ENCODE measurements at regions of chr18 and their contacts with region 1.

Region 1: DNA sequence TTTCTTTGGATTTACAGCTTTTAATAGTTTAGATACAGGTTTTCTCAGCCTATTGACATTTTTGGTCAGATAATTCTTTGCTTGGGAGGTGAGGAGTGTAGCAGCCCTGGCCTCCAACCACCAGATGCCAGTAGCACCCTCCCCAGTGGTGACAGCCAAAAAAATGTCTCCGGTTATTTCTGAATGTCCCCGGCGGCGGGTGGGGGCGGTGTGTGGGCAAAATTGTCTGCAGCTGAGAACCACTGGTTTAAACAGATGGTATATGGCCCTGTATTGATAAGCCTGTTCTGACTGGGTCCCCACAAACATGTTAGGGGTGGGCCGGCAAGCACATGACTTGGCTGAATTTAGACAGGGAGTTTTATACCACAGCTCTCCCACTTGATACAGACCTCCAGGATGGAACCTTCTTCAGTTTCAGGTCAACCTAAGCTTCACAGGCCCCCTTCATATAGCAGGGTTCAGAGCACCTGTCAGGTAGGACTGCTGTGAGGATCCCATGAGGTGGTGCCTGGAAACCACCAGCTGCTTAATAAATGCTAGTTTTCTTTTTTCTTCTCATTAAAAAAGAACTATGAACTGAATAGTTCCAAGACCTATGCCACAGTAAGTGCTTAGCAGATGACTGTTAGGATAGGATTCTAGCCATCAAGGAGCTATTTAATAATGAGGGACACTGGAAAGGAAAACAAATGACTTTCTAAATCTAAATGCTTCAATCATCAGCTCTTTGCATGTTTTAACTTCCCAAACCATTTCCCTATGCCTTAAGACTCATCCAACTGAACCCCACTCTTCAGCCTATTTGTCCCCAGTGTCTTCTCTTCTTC is 18.1 kb downstream of the LPIN2 start:
- DNase-seq: peak; percentile 50 to 87 (median 76)
- ATAC-seq: peak; percentile 92
- H3K4me3 ChIP-seq: peak overlapping the region in 1 of 2 experiments; percentile 22
- H3K4me3 Mint-ChIP-seq: peak overlapping the region; percentile 56
- H3K27ac ChIP-seq: no peak overlapping the region
- H3K27ac Mint-ChIP-seq: peak overlapping the region; percentile 78
- H3K4me1 ChIP-seq: peaks cover 46% of the 10 kb centered on the region
- H3K4me1 Mint-ChIP-seq: peaks cover 69% of the 10 kb centered on the region
- H3K27me3 ChIP-seq: no peaks in the 10 kb centered on the region
- H3K27me3 Mint-ChIP-seq: no peaks in the 10 kb centered on the region
- CTCF ChIP-seq: peak; percentile 72

Region 2: GRCh38 chr18:2687390-2688001 is 307.3 kb before region 1 on chr18:
- CTCF ChIA-PET with region 1: no interaction called
- POLR2A ChIA-PET with region 1: no interaction called
- intact Hi-C with region 1: no loop called
- DNase-seq: no peak
- ATAC-seq: no peak
- H3K4me3 ChIP-seq: no peak overlapping the region
- H3K4me3 Mint-ChIP-seq: peak overlapping the region; percentile 38
- H3K27ac ChIP-seq: peak overlapping the region in 1 of 2 experiments; percentile 26
- H3K27ac Mint-ChIP-seq: peak overlapping the region; percentile 23
- H3K4me1 ChIP-seq: peaks cover 27% of the 10 kb centered on the region
- H3K4me1 Mint-ChIP-seq: peaks cover 64% of the 10 kb centered on the region
- H3K27me3 ChIP-seq: no peaks in the 10 kb centered on the region
- H3K27me3 Mint-ChIP-seq: no peaks in the 10 kb centered on the region
- CTCF ChIP-seq: no peak

Region 3: DNA sequence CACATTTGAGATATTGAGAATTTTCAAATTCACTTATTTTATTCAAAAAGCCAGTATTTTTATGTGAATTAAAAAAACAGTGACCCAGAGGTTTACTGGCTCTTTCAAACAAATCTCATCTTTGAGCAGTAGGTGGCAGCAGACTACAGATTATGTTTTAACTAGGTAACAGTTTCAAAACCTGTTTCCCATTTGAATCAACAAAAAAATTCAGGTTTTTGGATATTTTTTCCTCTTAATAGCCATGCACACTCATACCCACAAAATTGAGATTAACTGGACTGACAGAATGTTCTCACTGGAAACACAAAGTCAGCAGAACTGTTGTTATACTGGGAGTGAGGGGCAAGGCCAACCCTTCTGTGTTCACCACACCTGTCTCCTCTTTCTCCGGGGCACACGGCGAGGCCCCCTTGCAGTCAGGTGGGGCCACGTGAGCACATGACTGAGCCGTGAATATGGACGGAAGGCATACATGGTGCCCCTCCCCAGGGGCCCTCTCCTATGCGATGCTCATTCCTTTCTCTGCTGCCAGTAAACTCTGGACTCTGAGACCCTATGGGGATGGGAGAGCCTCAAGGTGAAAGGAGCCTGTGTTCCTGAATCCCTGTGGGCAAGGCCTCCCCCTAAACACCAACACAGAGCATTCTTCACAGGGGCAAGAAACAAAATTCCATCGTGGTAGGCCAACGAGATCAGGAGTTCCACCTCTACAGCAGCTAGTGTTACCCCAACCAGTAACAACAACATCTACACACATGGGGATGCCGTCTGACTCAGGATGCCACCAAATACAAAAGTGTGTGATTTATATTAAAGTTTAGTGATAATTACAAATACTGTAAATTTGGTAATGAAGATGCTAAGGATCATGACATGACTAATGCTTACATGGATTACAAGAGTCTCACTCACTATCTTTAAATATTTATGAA is 62.3 kb before region 1 on chr18:
- CTCF ChIA-PET with region 1: interaction called, 205 read pairs
- POLR2A ChIA-PET with region 1: no interaction called
- intact Hi-C with region 1: no loop called
- DNase-seq: peak in 6 of 9 experiments; percentile 37 to 82 (median 52)
- ATAC-seq: peak; percentile 79
- H3K4me3 ChIP-seq: no peak overlapping the region
- H3K4me3 Mint-ChIP-seq: no peak overlapping the region
- H3K27ac ChIP-seq: peak overlapping the region in 1 of 2 experiments; percentile 51
- H3K27ac Mint-ChIP-seq: peak overlapping the region; percentile 89
- H3K4me1 ChIP-seq: peaks cover 6% of the 10 kb centered on the region
- H3K4me1 Mint-ChIP-seq: peaks cover 23% of the 10 kb centered on the region
- H3K27me3 ChIP-seq: no peaks in the 10 kb centered on the region
- H3K27me3 Mint-ChIP-seq: no peaks in the 10 kb centered on the region
- CTCF ChIP-seq: peak; percentile 96

Region 4: DNA sequence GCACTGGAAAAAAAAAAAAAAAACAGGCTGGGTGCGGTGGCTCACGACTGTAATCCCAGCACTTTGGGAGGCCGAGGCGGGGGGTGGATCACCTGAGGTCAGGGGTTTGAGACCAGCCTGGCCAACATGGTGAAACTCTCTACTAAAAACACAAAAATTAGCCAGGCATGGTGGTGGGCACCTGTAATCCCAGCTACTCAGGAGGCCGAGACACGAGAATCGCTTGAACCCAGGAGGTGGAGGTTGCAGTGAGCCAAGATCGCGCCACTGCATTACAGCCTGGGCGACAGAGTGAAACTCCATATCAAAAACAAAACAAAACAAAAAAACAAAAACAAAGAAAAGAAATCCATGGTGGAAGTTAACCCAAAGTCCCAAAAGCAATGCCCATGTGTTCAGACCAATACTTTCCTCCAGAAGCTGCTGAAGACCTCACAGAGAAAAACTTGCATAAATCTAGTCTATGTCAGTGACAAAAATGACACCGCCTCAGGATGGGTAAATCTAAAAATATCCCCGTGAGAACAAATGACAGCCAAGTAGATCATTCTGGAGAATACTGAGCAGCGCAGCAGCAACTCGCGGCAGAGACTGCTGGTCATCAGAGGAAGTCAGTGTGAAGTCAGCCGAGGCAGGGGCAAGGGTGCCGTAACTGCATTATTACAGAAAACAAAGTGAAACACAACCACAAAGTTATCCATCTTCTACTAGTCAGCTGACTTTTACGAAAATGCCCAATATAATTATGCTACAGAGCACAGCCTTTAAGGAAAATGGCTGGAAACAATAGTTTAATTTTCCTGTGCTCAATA is 22.9 kb before region 1 on chr18:
- CTCF ChIA-PET with region 1: interaction called, 10 read pairs
- POLR2A ChIA-PET with region 1: interaction called, 3 read pairs
- intact Hi-C with region 1: no loop called
- DNase-seq: peak; percentile 30 to 90 (median 72)
- ATAC-seq: peak; percentile 78
- H3K4me3 ChIP-seq: peak overlapping the region; percentile 41
- H3K4me3 Mint-ChIP-seq: peak overlapping the region; percentile 88
- H3K27ac ChIP-seq: peak overlapping the region; percentile 43 to 96
- H3K27ac Mint-ChIP-seq: peak overlapping the region; percentile 95
- H3K4me1 ChIP-seq: peaks cover 81% of the 10 kb centered on the region
- H3K4me1 Mint-ChIP-seq: peaks cover 91% of the 10 kb centered on the region
- H3K27me3 ChIP-seq: no peaks in the 10 kb centered on the region
- H3K27me3 Mint-ChIP-seq: no peaks in the 10 kb centered on the region
- CTCF ChIP-seq: no peak

Region 5: DNA sequence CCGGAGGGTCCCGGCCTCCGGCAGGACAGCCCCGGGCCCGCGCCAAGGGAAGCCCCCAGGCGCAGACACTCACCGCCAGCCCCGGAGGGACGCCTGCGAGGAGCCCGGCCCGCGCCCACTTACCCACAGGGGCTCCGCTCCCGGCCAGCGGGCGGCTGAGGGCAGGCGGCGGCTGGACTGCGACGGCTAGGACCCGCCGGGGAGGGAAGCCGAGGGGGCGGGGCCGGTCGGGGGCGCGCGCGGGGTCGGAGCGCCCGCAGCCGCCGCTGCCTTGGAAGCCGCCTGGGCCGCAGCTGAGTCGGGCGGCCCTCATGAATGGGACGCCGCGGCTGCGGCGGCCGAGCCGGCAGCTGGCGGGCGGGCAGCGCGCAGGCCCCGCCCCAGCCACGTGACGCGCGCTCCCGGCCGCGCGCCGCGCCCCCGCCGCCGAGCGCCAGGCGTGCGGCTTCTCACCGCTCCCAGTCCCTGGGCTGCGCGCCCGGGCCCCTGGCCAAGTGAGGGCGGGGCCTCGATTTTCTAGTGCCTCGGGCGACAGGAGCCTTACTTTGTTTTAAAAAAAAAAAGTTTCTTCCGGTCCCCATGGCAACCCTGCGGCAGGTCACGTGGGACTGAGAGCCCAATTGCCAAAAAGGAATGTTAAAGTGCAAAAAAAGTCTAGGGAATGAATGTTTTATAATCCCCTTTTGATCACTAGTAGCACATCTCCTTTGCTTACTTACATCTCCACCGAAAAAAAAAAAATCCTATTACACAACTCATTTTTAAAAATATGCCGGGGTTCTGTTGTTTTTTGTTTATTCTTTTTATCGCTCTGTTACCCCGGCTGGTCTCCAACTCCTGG is 18.4 kb after region 1 on chr18 and contains the start of gene LPIN2:
- CTCF ChIA-PET with region 1: interaction called, 30 read pairs
- POLR2A ChIA-PET with region 1: interaction called, 6 read pairs
- intact Hi-C with region 1: loop called in 1 of 2 experiments (anchors 1 kb)
- DNase-seq: peak; percentile 93 to 98 (median 95)
- ATAC-seq: peak; percentile 87
- H3K4me3 ChIP-seq: peak within 1 kb of the TSS; percentile 53
- H3K4me3 Mint-ChIP-seq: peak within 1 kb of the TSS; percentile 95
- H3K27ac ChIP-seq: peak within 1 kb of the TSS; percentile 73 to 79
- H3K27ac Mint-ChIP-seq: peak within 1 kb of the TSS; percentile 93
- H3K4me1 ChIP-seq: peaks cover 55% of the 10 kb centered on the region
- H3K4me1 Mint-ChIP-seq: peaks cover 64% of the 10 kb centered on the region
- H3K27me3 ChIP-seq: no peaks in the 10 kb centered on the region
- H3K27me3 Mint-ChIP-seq: no peaks in the 10 kb centered on the region
- CTCF ChIP-seq: no peak
- total RNA-seq, gene LPIN2: 50.3 to 50.9 TPM

Region 6: DNA sequence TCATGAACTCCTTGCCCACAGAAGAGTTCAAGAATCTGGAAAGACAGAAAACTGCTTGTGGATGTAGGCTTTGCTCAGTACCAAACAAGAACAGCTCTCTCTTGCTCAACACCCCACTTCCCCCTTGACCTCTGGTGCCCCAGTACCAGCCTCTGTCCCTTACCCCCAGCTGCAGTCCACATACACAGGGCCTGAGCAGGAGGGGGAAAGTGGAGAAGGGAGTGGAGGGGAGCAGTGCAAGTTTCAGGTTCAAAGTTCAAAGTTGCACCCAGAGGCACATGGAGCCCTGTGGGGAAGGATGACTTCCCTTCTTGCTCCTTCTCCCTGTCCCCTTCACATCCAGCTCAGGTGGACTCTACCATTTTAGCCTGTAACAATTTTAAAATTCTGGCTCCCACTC is 79.3 kb after region 1 on chr18:
- CTCF ChIA-PET with region 1: interaction called, 18 read pairs
- POLR2A ChIA-PET with region 1: no interaction called
- intact Hi-C with region 1: no loop called
- DNase-seq: peak in 1 of 9 experiments; percentile 43
- ATAC-seq: no peak
- H3K4me3 ChIP-seq: no peak overlapping the region
- H3K4me3 Mint-ChIP-seq: no peak overlapping the region
- H3K27ac ChIP-seq: no peak overlapping the region
- H3K27ac Mint-ChIP-seq: no peak overlapping the region
- H3K4me1 ChIP-seq: no peaks in the 10 kb centered on the region
- H3K4me1 Mint-ChIP-seq: peaks cover 22% of the 10 kb centered on the region
- H3K27me3 ChIP-seq: no peaks in the 10 kb centered on the region
- H3K27me3 Mint-ChIP-seq: no peaks in the 10 kb centered on the region
- CTCF ChIP-seq: no peak

Region 7: GRCh38 chr18:3129053-3129864 is 134.4 kb after region 1 on chr18:
- CTCF ChIA-PET with region 1: interaction called, 155 read pairs
- POLR2A ChIA-PET with region 1: interaction called, 3 read pairs
- intact Hi-C with region 1: loop called (anchors 1 kb)
- DNase-seq: peak; percentile 58 to 86 (median 77)
- ATAC-seq: peak; percentile 99
- H3K4me3 ChIP-seq: no peak overlapping the region
- H3K4me3 Mint-ChIP-seq: no peak overlapping the region
- H3K27ac ChIP-seq: no peak overlapping the region
- H3K27ac Mint-ChIP-seq: no peak overlapping the region
- H3K4me1 ChIP-seq: no peaks in the 10 kb centered on the region
- H3K4me1 Mint-ChIP-seq: peaks cover 9% of the 10 kb centered on the region
- H3K27me3 ChIP-seq: no peaks in the 10 kb centered on the region
- H3K27me3 Mint-ChIP-seq: no peaks in the 10 kb centered on the region
- CTCF ChIP-seq: peak; percentile 67

Region 8: GRCh38 chr18:3245853-3246634 is 251.2 kb after region 1 on chr18:
- CTCF ChIA-PET with region 1: interaction called, 39 read pairs
- POLR2A ChIA-PET with region 1: interaction called, 14 read pairs
- intact Hi-C with region 1: loop called (anchors 1 to 5 kb)
- DNase-seq: peak; percentile 44 to 89 (median 78)
- ATAC-seq: peak; percentile 60
- H3K4me3 ChIP-seq: peak overlapping the region; percentile 77 to 90
- H3K4me3 Mint-ChIP-seq: peak overlapping the region; percentile 92
- H3K27ac ChIP-seq: peak overlapping the region; percentile 79 to 89
- H3K27ac Mint-ChIP-seq: peak overlapping the region; percentile 90
- H3K4me1 ChIP-seq: peaks cover 11% of the 10 kb centered on the region
- H3K4me1 Mint-ChIP-seq: peaks cover 39% of the 10 kb centered on the region
- H3K27me3 ChIP-seq: no peaks in the 10 kb centered on the region
- H3K27me3 Mint-ChIP-seq: no peaks in the 10 kb centered on the region
- CTCF ChIP-seq: peak; percentile 84